ENCODE measurements at regions of chr10 and their contacts with region 1.

Region 1: DNA sequence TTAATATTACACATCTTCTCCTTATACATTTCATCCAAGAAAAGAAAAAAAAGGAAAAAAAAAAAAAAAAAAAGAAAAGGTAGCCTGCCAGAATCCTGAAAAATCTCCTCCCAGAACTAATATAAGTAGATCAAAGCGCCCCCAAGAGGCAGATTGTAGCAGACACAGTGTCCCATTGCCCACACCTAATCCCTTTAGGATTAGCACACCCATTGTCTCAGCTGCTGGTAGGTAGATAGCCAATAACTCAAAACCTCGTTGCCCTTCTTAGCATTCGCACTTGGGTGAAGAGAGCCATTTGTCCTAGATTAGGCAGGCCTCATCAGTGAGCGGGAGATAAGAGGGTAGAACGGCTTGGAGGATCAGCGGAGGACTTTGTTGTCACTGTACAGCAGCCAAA is 100.2 kb upstream of the SORCS1 start:
- DNase-seq: peak; percentile 6 to 13 (median 10)
- ATAC-seq: peak; percentile 51; the same call in 1 of the 3 replicates
- H3K4me3 ChIP-seq: no peak overlapping the region
- H3K27ac ChIP-seq: no peak overlapping the region
- H3K4me1 ChIP-seq: no peaks in the 10 kb centered on the region
- H3K27me3 ChIP-seq: no peaks in the 10 kb centered on the region
- CTCF ChIP-seq: 0 out of 6 replicates have a peak, but pooled peaks of 1 of the 3 experiments have one; percentile 14
- EP300 ChIP-seq: no peak
- POLR2A ChIP-seq: no peak
- RAD21 ChIP-seq: no peak

Region 2: DNA sequence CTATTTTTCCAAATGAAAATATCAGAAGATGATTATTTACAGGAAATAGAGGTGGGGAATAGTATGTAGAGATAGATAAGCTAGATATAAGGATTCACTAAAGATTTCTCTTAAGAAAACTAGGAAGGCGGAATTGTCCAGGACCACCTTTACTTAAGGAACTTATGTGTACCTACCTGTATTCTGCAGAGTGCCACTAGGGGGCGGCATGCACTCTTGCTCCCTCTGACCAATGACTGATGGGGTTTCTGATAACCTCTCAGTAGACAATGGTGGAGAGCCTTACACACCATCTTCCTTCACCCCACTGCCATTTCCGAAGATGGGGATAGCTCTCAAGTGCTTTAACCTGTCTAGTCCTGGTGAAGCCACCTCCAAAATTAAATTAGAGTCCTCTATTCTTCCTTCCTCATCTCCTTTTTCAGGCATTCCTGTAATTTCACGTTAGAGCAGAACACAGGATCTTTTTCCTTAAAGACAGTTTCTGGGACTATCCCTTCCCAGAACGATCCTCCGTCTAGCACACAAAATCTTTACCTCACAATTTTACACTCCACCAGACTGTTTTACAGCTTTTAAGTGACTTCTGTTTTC is 553.3 kb before region 1 on chr10:
- CTCF ChIA-PET with region 1: no interaction called
- POLR2A ChIA-PET with region 1: no interaction called
- in situ Hi-C with region 1: no loop called
- intact Hi-C with region 1: loop called (anchors 5 kb)
- DNase-seq: peak; percentile 64 to 74 (median 70)
- ATAC-seq: peak; percentile 86
- H3K4me3 ChIP-seq: no peak overlapping the region
- H3K27ac ChIP-seq: no peak overlapping the region
- H3K4me1 ChIP-seq: no peaks in the 10 kb centered on the region
- H3K27me3 ChIP-seq: no peaks in the 10 kb centered on the region
- CTCF ChIP-seq: peak; percentile 55 to 69 (median 68)
- EP300 ChIP-seq: no peak
- POLR2A ChIP-seq: no peak
- RAD21 ChIP-seq: peak; percentile 58 to 74

Measured in K562 (cell line).